Ovary (tissue), 10 donors: ENCODE measurements at regions of chr3 and their contacts with region 1.

Region 1: GRCh38 chr3:56988458-56989168 is 71.9 kb upstream of the SPATA12 start:
- DNase-seq: peak; percentile 84 to 94 (median 87)
- H3K4me3 ChIP-seq: no peak overlapping the region
- H3K27ac ChIP-seq: peak overlapping the region; percentile 46 to 50
- H3K4me1 ChIP-seq: peaks cover 15% of the 10 kb centered on the region
- H3K27me3 ChIP-seq: no peaks in the 10 kb centered on the region
- CTCF ChIP-seq: peak; percentile 78 to 92 (median 91)
- EP300 ChIP-seq: no peak
- POLR2A ChIP-seq: no peak

Region 2: DNA sequence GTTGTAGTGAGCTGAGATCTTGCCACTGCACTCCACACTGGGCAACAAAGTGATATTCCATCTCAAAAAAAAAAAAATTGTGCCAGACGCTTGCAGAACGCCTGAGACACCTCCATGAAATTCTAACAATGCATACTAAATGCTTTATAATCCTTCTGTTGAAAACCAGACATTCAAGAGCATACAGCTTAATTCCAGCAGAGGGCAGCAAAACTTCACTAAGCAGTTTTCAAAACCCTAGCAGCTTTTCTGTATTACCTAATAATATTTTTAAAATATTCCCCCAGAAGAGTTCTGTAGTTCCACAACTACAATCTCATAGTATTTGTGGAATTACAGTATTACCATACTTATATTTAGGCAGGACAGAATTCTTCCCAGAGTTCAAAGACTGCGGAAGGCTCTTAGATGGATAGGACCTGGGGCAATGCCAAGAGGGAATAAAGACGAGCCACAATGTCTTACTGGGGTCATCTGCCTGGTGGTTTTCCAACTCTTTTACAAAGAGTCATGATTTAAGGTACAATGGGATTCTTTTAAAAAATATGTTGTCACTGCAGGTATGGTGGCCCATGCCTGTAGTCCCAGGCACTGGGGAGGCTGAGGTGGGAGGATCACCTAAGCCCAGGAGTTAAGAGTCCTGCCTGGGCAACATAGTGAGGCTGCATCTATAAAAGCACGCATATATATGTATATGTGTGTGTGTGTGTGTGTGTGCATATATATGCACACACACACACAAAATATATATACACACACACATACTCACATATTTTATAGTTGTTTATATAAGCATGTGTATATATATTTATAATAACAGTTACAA is 285.9 kb before region 1 on chr3:
- intact Hi-C with region 1: loop called (anchors 2 kb)
- DNase-seq: peak in 2 of 5 donors; percentile 34 to 68
- H3K4me3 ChIP-seq: no peak overlapping the region
- H3K27ac ChIP-seq: no peak overlapping the region
- H3K4me1 ChIP-seq: no peaks in the 10 kb centered on the region
- H3K27me3 ChIP-seq: no peaks in the 10 kb centered on the region
- CTCF ChIP-seq: peak; percentile 79 to 91 (median 91)
- EP300 ChIP-seq: no peak
- POLR2A ChIP-seq: no peak

Region 3: GRCh38 chr3:56801662-56802377 is 186.8 kb before region 1 on chr3 and contains the start of gene ARHGEF3:
- intact Hi-C with region 1: loop called (anchors 5 to 10 kb)
- DNase-seq: peak; percentile 83 to 92 (median 90)
- H3K4me3 ChIP-seq: peak within 1 kb of the TSS; percentile 75
- H3K27ac ChIP-seq: peak within 1 kb of the TSS; percentile 45 to 68
- H3K4me1 ChIP-seq: peaks cover 2% of the 10 kb centered on the region
- H3K27me3 ChIP-seq: no peaks in the 10 kb centered on the region
- CTCF ChIP-seq: no peak
- EP300 ChIP-seq: no peak
- POLR2A ChIP-seq: peak; percentile 90
- total RNA-seq, gene ARHGEF3: 23.5 to 48.1 (median 39.5) TPM

Region 4: DNA sequence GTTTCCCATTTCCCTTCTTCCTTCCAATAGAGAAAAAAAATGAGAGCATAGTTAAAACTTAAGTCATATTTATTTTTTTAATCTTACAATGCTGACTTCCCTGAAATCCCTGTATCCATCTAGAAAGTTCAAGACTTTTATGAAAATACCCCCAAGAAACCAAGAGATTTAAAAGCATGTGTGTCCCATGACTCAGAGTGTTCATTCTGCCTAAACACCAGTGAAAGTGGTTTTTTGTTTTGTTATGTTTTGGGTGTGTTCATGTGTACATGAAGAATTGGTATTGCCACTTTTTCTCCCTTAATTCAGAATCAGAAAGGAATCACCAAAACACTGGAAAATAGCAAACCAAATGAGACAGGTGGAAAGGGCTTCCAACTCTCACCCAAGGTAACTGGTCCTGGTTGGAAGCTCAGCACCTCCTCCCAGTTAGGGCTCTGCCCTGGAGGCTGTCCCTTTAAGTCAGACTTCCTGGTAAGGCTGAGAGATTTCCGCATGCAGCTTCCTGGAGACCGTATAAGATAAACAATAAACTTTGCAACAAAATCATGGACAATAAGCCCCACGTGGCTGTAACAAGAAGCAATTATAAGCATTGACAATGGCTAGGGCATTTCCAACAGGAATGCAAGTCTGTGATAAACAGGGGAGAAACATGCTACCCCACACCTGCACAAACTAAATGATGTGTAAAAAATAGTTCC is 64.9 kb before region 1 on chr3:
- intact Hi-C with region 1: loop called in 1 of 4 experiments (anchors 10 kb)
- DNase-seq: peak in 1 of 5 donors; percentile 40
- H3K4me3 ChIP-seq: no peak overlapping the region
- H3K27ac ChIP-seq: peak overlapping the region in 1 of 2 donors; percentile 43
- H3K4me1 ChIP-seq: peaks cover 6% of the 10 kb centered on the region
- H3K27me3 ChIP-seq: no peaks in the 10 kb centered on the region
- CTCF ChIP-seq: no peak
- EP300 ChIP-seq: no peak
- POLR2A ChIP-seq: peak; percentile 11